ENCODE measurements at regions of chr4 and their contacts with region 1.

Region 1: GRCh38 chr4:1809754-1810511 is 16.8 kb downstream of the FGFR3 start:
- DNase-seq: peak; percentile 84
- H3K4me3 Mint-ChIP-seq: no peak overlapping the region
- H3K27ac Mint-ChIP-seq: no peak overlapping the region
- H3K4me1 Mint-ChIP-seq: no peaks in the 10 kb centered on the region
- H3K27me3 Mint-ChIP-seq: no peaks in the 10 kb centered on the region

Region 2: DNA sequence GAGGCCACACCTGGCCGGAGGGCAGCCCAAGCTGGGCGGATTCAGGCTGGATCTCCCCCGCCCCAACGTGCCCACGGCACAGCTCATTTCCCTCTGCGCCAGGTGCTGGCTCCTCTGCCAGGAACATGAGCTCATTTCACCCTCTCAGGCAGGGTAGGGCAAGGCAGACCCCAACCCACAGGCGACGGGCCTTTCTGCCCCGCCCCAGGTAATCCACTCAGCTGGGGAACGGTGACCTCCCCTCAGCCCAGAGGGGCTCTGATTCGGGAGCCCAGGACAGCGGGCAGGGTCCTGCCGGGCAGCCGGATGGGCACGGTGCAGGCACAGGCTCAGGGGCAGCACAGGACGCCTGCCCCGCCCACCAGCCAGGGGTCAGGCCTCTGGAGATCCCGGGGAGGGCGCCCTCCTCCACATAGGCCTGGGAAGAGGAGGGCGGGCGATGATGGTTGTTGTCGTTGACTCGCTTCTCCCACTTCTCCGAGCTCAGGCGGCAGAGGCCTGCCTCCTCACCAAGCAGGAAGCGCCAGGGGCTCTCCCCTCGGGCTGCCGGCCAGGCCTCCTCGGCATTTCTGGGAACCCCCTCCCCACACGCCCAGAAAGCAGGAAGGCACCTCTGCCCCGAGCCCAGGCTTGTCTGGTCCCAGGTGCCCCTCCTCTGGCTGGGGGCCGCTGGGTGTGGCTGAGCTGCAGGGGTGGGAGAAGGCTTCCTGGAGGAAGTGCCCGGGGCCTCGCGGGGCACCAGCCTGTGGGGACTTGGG is 57.5 kb before region 1 on chr4:
- CTCF ChIA-PET with region 1: interaction called, 63 read pairs
- POLR2A ChIA-PET with region 1: interaction called, 3 read pairs
- intact Hi-C with region 1: loop called (anchors 1 kb)
- DNase-seq: peak; percentile 80
- H3K4me3 Mint-ChIP-seq: no peak overlapping the region
- H3K27ac Mint-ChIP-seq: no peak overlapping the region
- H3K4me1 Mint-ChIP-seq: no peaks in the 10 kb centered on the region
- H3K27me3 Mint-ChIP-seq: no peaks in the 10 kb centered on the region